CD4-positive, alpha-beta T cell (primary cell): ENCODE measurements at regions of chr16 and their contacts with region 1.

Region 1: GRCh38 chr16:89917773-89918452 is 749 bp upstream of the MC1R start:
- DNase-seq: peak; percentile 58 to 92 (median 70)
- ATAC-seq: peak; percentile 73
- H3K4me3 ChIP-seq: peak overlapping the region; percentile 52
- H3K4me3 Mint-ChIP-seq: peak overlapping the region; percentile 76
- H3K27ac ChIP-seq: no peak overlapping the region
- H3K27ac Mint-ChIP-seq: peak overlapping the region; percentile 39
- H3K4me1 ChIP-seq: peaks cover 72% of the 10 kb centered on the region
- H3K4me1 Mint-ChIP-seq: peaks cover 41% of the 10 kb centered on the region
- H3K27me3 ChIP-seq: peaks cover 11 to 26% of the 10 kb centered on the region in 2 experiments
- H3K27me3 Mint-ChIP-seq: peaks cover 10% of the 10 kb centered on the region
- CTCF ChIP-seq: no peak

Region 2: DNA sequence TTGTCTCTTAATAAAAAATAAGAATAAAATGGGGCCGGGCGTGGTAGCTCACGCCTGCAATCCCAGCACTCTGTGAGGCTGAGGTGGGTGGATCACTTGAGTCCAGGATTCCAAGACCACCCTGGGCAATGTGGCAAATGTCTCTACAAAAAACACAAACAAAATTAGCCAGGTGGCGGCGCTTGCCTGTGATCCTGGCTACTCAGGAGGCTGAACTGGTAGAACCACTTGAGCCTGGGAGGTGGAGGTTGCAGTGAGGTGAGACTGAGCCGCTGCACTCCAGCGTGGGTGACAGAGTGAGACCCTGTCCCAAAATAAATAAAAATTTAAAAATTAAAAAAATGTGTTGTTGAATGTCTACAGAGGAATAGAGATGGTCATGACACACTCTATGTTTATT is 27.8 kb after region 1 on chr16:
- CTCF ChIA-PET with region 1: no interaction called
- POLR2A ChIA-PET with region 1: no interaction called
- intact Hi-C with region 1: loop called in 1 of 2 experiments (anchors 2 kb)
- DNase-seq: no peak
- ATAC-seq: no peak
- H3K4me3 ChIP-seq: no peak overlapping the region
- H3K4me3 Mint-ChIP-seq: no peak overlapping the region
- H3K27ac ChIP-seq: no peak overlapping the region
- H3K27ac Mint-ChIP-seq: no peak overlapping the region
- H3K4me1 ChIP-seq: peaks cover 31% of the 10 kb centered on the region
- H3K4me1 Mint-ChIP-seq: peaks cover 3% of the 10 kb centered on the region
- H3K27me3 ChIP-seq: peaks cover 11 to 24% of the 10 kb centered on the region in 2 experiments
- H3K27me3 Mint-ChIP-seq: peaks cover 22% of the 10 kb centered on the region
- CTCF ChIP-seq: no peak